Panc1 (cell line): ENCODE measurements at regions of chr2 and their contacts with region 1.

Region 1: GRCh38 chr2:46983065-46983801 is 67.6 kb upstream of the MCFD2 start:
- DNase-seq: no peak
- ATAC-seq: no peak
- H3K4me3 ChIP-seq: no peak overlapping the region
- H3K27ac ChIP-seq: no peak overlapping the region
- H3K4me1 ChIP-seq: peaks cover 29% of the 10 kb centered on the region; the same call in 1 of the 2 replicates
- H3K27me3 ChIP-seq: no peaks in the 10 kb centered on the region
- CTCF ChIP-seq: no peak

Region 2: DNA sequence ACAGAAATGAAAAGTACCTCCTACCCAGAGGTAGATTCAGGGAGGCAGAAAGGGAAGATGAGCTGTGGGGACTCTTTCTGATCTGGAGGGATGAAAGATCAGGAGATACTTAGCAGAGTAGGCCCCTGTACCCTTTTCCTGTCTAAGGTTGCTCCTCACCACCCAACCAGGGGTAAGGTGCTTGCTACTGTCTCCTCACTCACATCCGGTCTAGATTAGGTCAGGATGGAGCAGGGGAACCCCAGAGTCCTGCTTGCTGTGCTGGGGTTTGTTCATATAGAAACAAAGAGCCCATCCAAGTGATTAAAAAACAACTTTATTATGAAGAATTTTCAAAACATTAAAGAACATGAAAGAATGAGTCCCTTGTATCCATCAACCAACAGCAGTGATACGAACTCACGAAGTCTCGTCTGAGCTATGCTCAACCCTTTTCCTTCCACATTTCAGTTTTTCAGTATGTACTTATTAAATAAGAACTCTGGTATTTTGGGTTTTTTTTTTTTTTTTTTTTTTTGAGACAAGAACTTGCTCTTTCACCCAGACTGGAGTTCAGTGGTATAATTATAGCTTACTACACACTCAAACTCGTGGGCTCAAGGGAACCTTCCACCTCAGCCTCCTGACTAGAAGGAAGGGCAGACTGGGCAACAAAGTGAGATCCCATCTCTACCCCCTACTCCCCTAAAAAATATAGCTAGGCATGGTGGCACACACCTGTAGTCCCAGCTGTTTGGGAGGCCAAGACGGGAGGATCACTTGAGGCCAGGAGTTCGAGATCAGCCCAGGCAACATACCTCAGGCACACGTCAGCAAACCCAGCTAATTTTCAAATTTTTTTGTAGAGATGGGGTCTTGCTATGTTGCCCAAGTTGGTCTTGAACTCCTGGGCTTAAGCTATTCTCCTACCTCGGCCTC is 39.1 kb before region 1 on chr2:
- CTCF ChIA-PET with region 1: no interaction called
- POLR2A ChIA-PET with region 1: interaction called, 11 read pairs
- in situ Hi-C with region 1: no loop called
- intact Hi-C with region 1: no loop called
- DNase-seq: no peak
- ATAC-seq: no peak
- H3K4me3 ChIP-seq: no peak overlapping the region
- H3K27ac ChIP-seq: no peak overlapping the region
- H3K4me1 ChIP-seq: peaks cover 17% of the 10 kb centered on the region
- H3K27me3 ChIP-seq: no peaks in the 10 kb centered on the region
- CTCF ChIP-seq: no peak